ENCODE measurements at regions of chr20 and their contacts with region 1.

Region 1: DNA sequence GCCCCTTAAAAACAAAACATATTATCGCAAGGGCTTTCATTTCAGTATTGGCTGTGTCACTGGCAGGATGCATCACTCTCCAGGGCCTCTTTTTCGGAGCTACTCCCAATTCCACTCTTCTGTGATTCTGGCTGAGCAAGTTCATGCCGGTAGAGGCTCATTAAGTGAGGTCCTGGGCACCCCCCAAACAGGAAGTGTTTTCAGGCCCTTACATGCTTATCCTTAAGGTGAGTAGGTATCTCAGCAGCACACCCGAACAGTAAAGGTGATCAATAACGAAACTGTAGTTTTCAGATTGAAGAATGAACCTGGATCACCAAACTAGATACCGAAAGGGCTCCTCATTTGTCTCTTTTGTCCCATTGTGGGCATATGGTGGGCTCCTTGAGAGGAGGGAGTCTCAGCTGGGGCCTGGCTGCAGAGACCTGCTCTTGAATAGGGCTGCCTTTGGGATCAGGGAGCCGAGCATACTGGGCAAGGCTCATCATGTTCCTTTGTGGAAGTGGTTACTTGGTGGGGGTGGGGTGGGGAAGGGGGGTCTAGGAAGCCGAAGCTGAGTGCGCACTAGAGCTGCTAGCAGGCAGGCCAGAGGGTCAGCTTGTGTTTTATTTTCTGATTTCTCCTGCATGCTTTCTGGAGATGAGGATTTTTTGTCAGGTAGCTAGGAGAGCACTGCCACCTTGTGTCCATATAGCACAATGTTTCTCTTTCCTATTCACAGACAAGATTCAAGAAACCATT is 65.2 kb downstream of the CDS2 start:
- DNase-seq: peak; percentile 43
- H3K4me3 ChIP-seq: no peak overlapping the region
- H3K27ac ChIP-seq: no peak overlapping the region
- H3K4me1 ChIP-seq: no peaks in the 10 kb centered on the region
- H3K27me3 ChIP-seq: no peaks in the 10 kb centered on the region
- CTCF ChIP-seq: peak; percentile 59

Region 2: GRCh38 chr20:5126512-5127203 is 65.3 kb before region 1 on chr20 and contains the start of gene CDS2:
- intact Hi-C with region 1: loop called (anchors 5 kb)
- DNase-seq: peak; percentile 100
- H3K4me3 ChIP-seq: peak within 1 kb of the TSS; percentile 80
- H3K27ac ChIP-seq: peak within 1 kb of the TSS; percentile 86
- H3K4me1 ChIP-seq: peaks cover 12% of the 10 kb centered on the region
- H3K27me3 ChIP-seq: no peaks in the 10 kb centered on the region
- CTCF ChIP-seq: peak; percentile 35
- total RNA-seq, gene CDS2: 31.7 to 44.3 TPM

Region 3: GRCh38 chr20:5282561-5282960 is 90.6 kb after region 1 on chr20:
- intact Hi-C with region 1: no loop called
- DNase-seq: no peak
- H3K4me3 ChIP-seq: no peak overlapping the region
- H3K27ac ChIP-seq: no peak overlapping the region
- H3K4me1 ChIP-seq: no peaks in the 10 kb centered on the region
- H3K27me3 ChIP-seq: no peaks in the 10 kb centered on the region
- CTCF ChIP-seq: no peak

Measured in colonic mucosa (tissue), 4 donors.